Activated B cell treated with CpG ODN at 0.5 μM for 24 hours (primary cell): ENCODE measurements at regions of chr12 and their contacts with region 1.

Region 1: DNA sequence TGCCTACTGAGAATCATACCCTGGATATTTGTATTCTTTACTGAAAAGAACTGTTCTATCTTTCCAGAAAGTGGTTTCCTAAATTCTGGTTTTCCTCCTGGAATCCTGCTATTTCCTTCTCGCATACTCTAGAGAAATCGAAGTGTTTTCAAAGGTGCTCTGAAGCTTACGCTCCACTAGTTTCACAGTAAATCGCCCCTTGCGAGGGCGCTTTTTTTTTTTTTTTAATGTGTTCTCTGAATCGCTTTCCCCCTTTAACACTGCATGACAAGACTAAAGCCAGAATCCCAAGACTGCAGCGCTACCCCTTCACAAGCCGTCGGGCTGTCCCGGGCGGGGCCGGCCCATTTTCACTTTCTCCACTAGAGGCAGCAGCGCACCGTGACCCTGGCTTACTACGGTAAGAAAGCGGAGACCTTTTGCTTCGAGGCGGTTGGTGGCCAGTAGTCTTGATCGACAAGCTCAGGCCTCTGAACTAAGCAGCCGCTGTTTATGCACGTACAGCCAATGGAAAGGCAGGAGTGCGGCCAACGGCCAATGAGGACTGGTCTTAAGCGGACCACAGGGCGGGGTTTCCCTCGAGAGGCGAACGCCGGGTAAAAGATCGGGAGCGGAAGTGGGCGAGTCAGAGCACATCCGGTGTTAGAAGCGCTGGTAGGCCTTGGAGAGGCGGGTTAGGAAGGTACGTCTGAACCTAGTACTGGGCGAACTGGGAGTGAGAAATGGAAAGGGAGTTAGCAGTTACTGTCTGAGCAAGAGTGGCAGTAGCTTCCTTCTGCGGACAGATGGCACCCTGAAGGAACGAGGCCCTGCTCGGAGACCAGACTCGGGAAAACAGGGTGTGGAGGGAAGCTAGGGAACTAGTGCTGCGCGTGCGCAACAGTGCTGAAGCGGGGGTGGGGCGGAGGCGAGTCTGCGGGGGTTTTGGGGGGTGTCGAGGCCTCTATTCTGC is at the start of gene TMBIM6:
- DNase-seq: peak; percentile 92
- ATAC-seq: peak; percentile 91
- H3K4me3 Mint-ChIP-seq: peak within 1 kb of the TSS; percentile 95
- H3K27ac Mint-ChIP-seq: peak within 1 kb of the TSS; percentile 98
- H3K4me1 Mint-ChIP-seq: peaks cover 49% of the 10 kb centered on the region
- H3K27me3 Mint-ChIP-seq: no peaks in the 10 kb centered on the region
- CTCF ChIP-seq: no peak
- total RNA-seq, gene TMBIM6: 355 and 366 TPM in 2 replicates

Region 2: DNA sequence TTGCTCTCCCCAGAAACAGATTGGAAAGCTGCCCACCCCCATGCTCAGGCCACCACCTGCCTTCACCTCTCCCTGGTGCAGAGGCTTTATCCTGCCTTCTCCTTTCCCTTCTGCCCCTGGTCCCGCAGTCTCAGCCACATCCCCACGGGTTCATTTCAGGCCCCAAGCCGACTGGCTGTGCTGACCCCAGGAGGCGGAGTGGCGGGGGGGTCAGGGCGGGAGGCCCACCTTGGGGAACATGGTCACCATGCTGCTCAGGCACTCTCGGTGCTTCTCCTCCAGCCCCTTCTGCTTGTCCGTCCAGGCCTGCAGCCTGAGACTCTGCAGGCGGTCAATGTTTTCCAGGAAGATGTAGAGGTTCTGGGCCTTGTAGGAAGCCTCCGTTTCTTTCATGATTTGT is 142.7 kb before region 1 on chr12:
- CTCF ChIA-PET with region 1: no interaction called
- POLR2A ChIA-PET with region 1: no interaction called
- intact Hi-C with region 1: no loop called
- DNase-seq: no peak
- ATAC-seq: no peak
- H3K4me3 Mint-ChIP-seq: no peak overlapping the region
- H3K27ac Mint-ChIP-seq: no peak overlapping the region
- H3K4me1 Mint-ChIP-seq: peaks cover 3% of the 10 kb centered on the region
- H3K27me3 Mint-ChIP-seq: no peaks in the 10 kb centered on the region
- CTCF ChIP-seq: no peak

Region 3: GRCh38 chr12:49662998-49663843 is 78.0 kb before region 1 on chr12:
- CTCF ChIA-PET with region 1: interaction called, 5 read pairs
- POLR2A ChIA-PET with region 1: interaction called, 18 read pairs
- intact Hi-C with region 1: no loop called
- DNase-seq: peak; percentile 48
- ATAC-seq: peak; percentile 83
- H3K4me3 Mint-ChIP-seq: peak overlapping the region; percentile 80
- H3K27ac Mint-ChIP-seq: peak overlapping the region; percentile 94
- H3K4me1 Mint-ChIP-seq: peaks cover 85% of the 10 kb centered on the region
- H3K27me3 Mint-ChIP-seq: no peaks in the 10 kb centered on the region
- CTCF ChIP-seq: no peak

Region 4: DNA sequence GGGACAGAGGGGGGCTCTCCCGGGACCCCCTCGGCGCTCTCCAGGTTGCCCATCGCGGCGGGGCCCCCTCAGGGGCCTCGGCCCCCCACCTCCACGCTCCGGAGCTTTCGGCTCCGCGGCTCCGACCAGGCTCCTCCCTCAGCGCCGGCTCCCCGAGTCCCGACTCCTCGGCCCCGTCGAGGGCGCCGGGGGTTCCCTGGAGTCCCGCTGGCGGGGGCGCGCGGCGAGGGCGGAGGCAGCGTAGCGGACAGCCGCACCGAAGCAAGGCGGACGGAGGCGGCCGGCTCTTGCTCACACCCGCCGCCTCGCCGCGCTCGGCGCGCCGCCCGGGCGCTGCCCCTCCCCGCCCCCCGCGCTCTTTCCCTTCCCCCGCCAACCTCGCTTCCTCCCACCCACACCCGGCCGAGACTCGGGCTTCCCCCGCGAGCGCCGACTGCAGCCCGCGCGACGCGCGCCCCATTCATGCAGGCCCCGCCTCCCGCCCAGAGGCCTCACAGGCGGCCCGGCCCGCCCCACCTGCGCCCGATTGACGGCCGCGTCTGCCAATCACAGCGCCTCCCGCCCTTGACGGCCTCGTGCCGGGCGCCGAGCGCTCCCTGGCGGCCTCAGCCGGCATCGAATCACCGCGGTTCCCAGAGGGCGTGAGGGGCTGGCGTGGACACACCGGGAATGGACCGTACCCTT is 33.9 kb before region 1 on chr12 and contains the start of gene FMNL3:
- CTCF ChIA-PET with region 1: interaction called, 5 read pairs
- POLR2A ChIA-PET with region 1: interaction called, 24 read pairs
- intact Hi-C with region 1: loop called (anchors 1 kb)
- DNase-seq: peak; percentile 99
- ATAC-seq: peak; percentile 90
- H3K4me3 Mint-ChIP-seq: peak within 1 kb of the TSS; percentile 97
- H3K27ac Mint-ChIP-seq: peak within 1 kb of the TSS; percentile 91
- H3K4me1 Mint-ChIP-seq: peaks cover 45% of the 10 kb centered on the region
- H3K27me3 Mint-ChIP-seq: peaks cover 5% of the 10 kb centered on the region
- CTCF ChIP-seq: no peak
- total RNA-seq, gene FMNL3: 74.7 and 84.3 TPM in 2 replicates

Region 5: DNA sequence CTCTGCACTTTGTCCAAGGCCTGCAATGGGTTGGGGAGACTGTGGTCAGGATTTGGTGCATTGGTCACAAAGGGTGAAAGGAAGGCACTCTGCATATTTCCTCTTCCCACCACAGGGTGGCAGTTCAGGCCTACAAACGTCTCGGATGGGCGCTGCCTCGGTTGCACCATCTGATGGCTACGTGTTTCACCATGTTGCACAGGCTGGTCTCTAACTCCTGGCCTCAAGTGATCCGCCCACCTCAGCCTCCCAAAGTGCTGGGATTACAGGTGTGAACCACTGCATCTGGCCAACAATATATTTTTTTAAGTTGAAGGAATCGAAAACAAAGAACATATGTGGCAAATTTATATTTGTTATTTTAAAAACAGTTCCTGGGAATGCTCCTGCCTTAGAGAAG is 35.2 kb after region 1 on chr12:
- CTCF ChIA-PET with region 1: interaction called, 35 read pairs
- POLR2A ChIA-PET with region 1: interaction called, 24 read pairs
- intact Hi-C with region 1: loop called (anchors 1 kb)
- DNase-seq: no peak
- ATAC-seq: peak; percentile 85
- H3K4me3 Mint-ChIP-seq: no peak overlapping the region
- H3K27ac Mint-ChIP-seq: no peak overlapping the region
- H3K4me1 Mint-ChIP-seq: peaks cover 13% of the 10 kb centered on the region
- H3K27me3 Mint-ChIP-seq: peaks cover 17% of the 10 kb centered on the region
- CTCF ChIP-seq: no peak

Region 6: DNA sequence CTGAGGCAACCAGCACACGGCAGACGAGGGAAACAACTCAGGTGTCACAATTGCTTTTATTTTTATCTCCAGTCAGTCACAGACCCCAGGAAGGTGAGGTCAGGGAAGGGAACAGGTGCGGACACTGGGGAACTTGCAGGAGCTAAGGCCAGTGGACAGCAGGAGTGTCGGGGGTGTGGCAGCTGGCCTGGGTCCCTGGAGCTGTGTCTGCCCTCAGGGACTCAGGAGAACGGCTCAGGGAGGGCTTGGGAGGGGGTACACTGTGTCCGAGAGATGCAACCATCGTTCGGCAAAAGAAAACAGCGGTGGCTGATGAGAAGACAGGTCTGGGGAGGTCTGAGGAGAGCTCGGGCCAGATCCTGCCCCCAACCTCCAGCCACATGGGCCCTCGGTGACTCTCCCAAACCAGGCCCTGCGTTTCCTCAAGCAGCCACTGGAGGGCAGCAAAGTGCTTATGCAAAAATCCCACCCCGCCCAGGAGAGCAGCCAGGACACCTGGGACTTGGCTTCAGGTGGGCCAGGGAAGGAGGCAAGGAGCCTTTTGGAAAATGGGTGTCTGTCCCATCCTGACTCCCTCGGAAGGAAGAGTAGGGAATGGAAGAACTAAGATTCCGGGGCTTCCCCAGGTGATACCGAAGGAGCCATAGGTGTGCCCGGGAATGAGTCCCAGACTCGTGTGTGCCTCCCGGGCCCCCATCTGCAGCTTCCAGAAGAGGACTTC is 125.8 kb after region 1 on chr12:
- CTCF ChIA-PET with region 1: interaction called, 5 read pairs
- POLR2A ChIA-PET with region 1: interaction called, 3 read pairs
- intact Hi-C with region 1: loop called (anchors 1 kb)
- DNase-seq: peak; percentile 67
- ATAC-seq: peak; percentile 90
- H3K4me3 Mint-ChIP-seq: no peak overlapping the region
- H3K27ac Mint-ChIP-seq: no peak overlapping the region
- H3K4me1 Mint-ChIP-seq: no peaks in the 10 kb centered on the region
- H3K27me3 Mint-ChIP-seq: peaks cover 6% of the 10 kb centered on the region
- CTCF ChIP-seq: no peak